ENCODE measurements at regions of chr20 and their contacts with region 1.

Region 1: DNA sequence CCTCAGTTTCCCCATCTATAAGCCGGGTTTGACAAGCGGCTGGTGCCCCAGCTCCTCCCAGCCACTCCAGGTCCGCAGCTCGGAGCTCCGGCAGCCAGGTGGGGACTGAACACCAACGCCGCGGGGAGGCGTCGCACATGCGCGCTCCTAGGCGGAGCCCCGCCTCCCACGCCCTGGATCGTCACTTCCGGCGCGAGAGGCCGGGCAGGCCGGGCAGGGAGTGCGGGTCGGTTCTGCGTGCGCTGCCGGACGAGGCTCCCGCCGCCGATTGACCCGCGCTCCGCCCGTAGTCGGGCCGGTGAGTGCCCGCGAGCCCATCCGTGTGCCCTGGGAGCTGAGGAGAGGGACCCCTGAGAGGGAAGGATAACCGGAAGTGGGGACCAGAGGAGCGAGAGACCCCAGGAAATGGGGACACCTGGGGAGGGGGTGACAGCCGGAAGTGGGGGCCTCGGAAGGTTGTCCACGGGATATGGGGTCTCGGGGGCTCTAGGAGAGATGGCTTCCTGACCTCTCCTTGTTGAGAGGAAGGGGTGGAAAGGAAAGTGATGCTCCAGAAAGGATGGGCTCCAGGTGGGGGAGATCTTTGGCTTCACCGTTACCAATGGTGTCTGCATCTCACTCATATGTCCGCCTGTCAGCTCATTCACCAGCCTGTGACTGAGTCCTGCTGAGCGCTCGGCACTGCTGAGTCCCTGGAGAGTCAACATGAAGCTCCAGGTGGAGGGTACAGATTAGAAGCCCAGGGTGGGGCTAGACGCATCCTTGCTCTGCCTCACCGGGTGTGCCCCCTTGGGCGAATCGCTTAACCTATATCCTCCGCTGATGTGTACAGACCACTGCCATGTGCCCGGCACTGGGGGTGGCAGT is at the start of gene TTPAL:
- DNase-seq: peak; percentile 77 to 96 (median 87)
- H3K4me3 ChIP-seq: peak within 1 kb of the TSS; percentile 63 to 98 (median 87)
- H3K27ac ChIP-seq: peak within 1 kb of the TSS; percentile 70 to 97 (median 90)
- H3K27me3 ChIP-seq: no peaks in the 10 kb centered on the region
- CTCF ChIP-seq: peak; percentile 14 to 79 (median 62)
- total RNA-seq, gene TTPAL: 10.0 to 26.4 (median 18.3) TPM

Region 2: GRCh38 chr20:44210422-44211176 is 265.3 kb before region 1 on chr20 and contains the start of gene OSER1:
- intact Hi-C with region 1: loop called (anchors 5 kb)
- DNase-seq: peak; percentile 95 to 98 (median 97)
- H3K4me3 ChIP-seq: peak within 1 kb of the TSS; percentile 75 to 100 (median 96)
- H3K27ac ChIP-seq: peak within 1 kb of the TSS; percentile 67 to 98 (median 92)
- H3K27me3 ChIP-seq: no peaks in the 10 kb centered on the region
- CTCF ChIP-seq: peak in 34 of 56 donors; percentile 7 to 51 (median 30)
- total RNA-seq, gene OSER1: 20.8 to 41.9 (median 29.8) TPM

Region 3: GRCh38 chr20:44310664-44311639 is 165.0 kb before region 1 on chr20 and contains the start of gene FITM2:
- intact Hi-C with region 1: loop called in 1 of 2 experiments (anchors 5 kb)
- DNase-seq: peak; percentile 94 to 98 (median 96)
- H3K4me3 ChIP-seq: peak within 1 kb of the TSS; percentile 67 to 100 (median 95)
- H3K27ac ChIP-seq: peak within 1 kb of the TSS in 53 of 59 donors; percentile 6 to 93 (median 75)
- H3K27me3 ChIP-seq: no peaks in the 10 kb centered on the region
- CTCF ChIP-seq: peak; percentile 93 to 100 (median 99)
- total RNA-seq, gene FITM2: 10.8 to 20.4 (median 16.2) TPM

Region 4: DNA sequence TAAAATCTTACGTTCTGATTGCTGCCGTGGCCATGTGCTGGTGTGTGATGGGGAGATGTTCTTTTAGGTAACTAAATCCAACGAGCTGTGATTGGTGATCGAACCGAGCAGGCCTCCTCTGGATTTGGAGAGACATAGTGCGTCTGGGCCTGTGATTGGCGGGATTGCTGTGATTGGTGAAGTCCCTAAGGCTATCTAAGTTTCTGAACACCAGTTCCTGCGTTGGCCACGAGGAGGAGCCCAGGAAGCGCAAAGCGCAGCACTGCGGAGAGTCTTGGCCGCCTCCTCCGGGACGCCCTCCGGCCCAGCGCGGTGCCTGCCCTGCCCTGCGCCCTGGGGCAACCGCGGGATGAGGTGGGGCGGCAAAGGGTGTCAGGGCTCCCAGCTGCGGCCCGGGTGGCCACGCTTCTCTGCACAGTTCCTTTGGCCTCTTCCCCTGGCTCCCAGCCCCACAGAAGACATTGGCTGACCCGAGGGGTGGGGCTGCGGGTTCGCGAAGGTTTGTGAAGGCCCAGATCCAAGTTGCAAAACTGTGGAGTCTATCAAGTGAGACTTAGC is 87.4 kb before region 1 on chr20:
- intact Hi-C with region 1: no loop called
- DNase-seq: peak; percentile 18 to 84 (median 62)
- H3K4me3 ChIP-seq: peak overlapping the region in 4 of 59 donors; percentile 6 to 29 (median 22)
- H3K27ac ChIP-seq: no peak overlapping the region
- H3K27me3 ChIP-seq: peaks cover 0 to 17% (median 0%) of the 10 kb centered on the region in 45 donors
- CTCF ChIP-seq: peak; percentile 43 to 78 (median 64)

Region 5: GRCh38 chr20:44516491-44516890 is 40.6 kb after region 1 on chr20:
- intact Hi-C with region 1: loop called in 1 of 2 experiments (anchors 5 kb)
- DNase-seq: no peak
- H3K4me3 ChIP-seq: peak overlapping the region in 2 of 59 donors; percentile 11 to 17
- H3K27ac ChIP-seq: peak overlapping the region in 21 of 59 donors; percentile 7 to 55 (median 26)
- H3K27me3 ChIP-seq: no peaks in the 10 kb centered on the region
- CTCF ChIP-seq: no peak

Region 6: DNA sequence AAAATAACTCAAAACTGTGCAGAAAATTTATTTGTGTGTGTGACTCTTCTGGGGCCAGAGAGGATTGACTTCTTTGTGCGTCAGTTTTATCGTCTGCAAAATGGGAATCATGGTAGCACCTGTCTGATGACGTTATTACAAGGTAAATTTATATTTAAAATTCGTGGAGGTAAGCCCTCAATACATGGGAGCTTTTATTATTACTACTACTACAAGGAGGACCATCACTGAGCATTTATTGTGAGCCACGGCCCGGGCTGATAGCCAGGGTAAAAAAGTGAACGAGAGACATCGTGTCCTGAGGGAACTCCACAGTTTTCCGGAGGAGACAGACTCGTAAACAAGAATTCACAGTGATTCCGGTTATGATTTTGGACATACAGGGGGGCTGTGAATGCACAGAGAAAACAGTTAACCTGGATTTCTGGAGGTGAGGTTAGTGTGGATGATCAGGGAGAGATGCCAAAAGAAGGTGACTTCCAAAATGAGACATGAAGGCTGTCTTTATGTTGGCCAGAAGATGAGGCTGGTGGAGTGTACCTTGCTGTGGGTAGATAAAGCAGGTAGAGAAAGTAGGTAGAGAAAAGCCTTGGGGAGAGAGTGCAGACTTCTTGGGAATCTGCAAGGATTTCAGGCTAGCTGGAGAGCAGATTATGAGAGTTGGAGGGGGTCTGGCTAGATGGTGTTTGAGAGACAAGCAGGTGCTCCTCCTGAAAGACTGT is 56.5 kb after region 1 on chr20:
- intact Hi-C with region 1: loop called in 1 of 2 experiments (anchors 5 kb)
- DNase-seq: no peak
- H3K4me3 ChIP-seq: peak overlapping the region; percentile 66 to 99 (median 87)
- H3K27ac ChIP-seq: peak overlapping the region in 58 of 59 donors; percentile 33 to 94 (median 84)
- H3K27me3 ChIP-seq: no peaks in the 10 kb centered on the region
- CTCF ChIP-seq: no peak

Region 7: GRCh38 chr20:44601801-44602204 is 125.9 kb after region 1 on chr20:
- intact Hi-C with region 1: loop called in 1 of 2 experiments (anchors 5 kb)
- DNase-seq: peak in 1 of 10 donors; percentile 45
- H3K4me3 ChIP-seq: no peak overlapping the region
- H3K27ac ChIP-seq: peak overlapping the region in 58 of 59 donors; percentile 9 to 93 (median 78)
- H3K27me3 ChIP-seq: no peaks in the 10 kb centered on the region
- CTCF ChIP-seq: peak in 1 of 56 donors; percentile 11

Region 8: GRCh38 chr20:44747166-44748004 is 271.5 kb after region 1 on chr20:
- intact Hi-C with region 1: loop called in 1 of 2 experiments (anchors 10 kb)
- DNase-seq: peak; percentile 61 to 94 (median 84)
- H3K4me3 ChIP-seq: peak overlapping the region in 1 of 59 donors; percentile 2
- H3K27ac ChIP-seq: peak overlapping the region in 5 of 59 donors; percentile 1 to 50 (median 31)
- H3K27me3 ChIP-seq: peaks cover 0 to 13% (median 0%) of the 10 kb centered on the region in 45 donors
- CTCF ChIP-seq: peak; percentile 52 to 83 (median 72)

Measured in dorsolateral prefrontal cortex (tissue), 120 donors.